Activated CD8-positive, alpha-beta T cell treated with anti-CD3 and anti-CD28 coated beads, Interleukin-2, amount 10 ng/mL, durations not matched to agents 7 days and 5 days (primary cell): ENCODE measurements at regions of chr15 and their contacts with region 1.

Region 1: DNA sequence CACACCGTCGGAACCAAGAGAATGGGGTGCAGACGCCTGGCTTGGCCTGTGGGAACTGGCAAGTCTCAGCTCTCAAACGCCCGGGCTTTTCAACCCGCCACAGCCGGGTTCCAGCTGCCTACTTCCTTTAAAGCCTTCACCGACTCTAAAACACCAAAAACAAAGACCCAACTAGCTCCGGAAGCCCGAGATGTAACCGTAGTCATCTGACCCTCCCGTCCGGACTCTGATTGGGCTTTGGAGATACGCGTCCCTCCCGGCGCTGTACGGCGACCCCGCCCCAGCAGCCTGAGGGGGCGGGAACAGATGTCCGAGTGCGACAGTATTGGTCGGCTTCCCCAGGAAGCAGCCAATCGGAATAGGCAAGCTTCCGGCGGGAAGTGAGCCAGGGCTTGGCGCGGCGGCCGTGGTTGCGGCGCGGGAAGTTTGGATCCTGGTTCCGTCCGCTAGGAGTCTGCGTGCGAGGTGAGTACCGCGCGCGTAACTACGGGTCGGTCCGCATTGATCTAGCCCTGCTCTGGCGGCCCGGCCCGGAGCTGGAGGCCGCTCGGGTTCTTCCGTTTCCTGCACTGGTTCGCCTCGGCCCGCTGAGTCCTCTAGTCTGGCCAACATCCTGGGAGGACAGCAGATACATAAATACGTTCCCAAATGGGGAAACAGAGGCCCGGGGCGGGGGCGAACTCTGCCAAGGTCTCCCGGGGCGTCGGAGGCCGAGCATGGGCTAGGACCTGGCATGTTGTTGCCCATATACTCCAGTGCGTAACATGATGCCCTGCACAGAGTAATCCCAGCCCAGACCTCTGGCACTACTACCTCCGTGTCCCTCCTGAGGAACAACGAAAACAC is at the start of gene BLM:
- DNase-seq: peak; percentile 97
- ATAC-seq: peak; percentile 99
- H3K4me3 Mint-ChIP-seq: peak within 1 kb of the TSS; percentile 81
- H3K27ac Mint-ChIP-seq: peak within 1 kb of the TSS; percentile 94
- H3K4me1 Mint-ChIP-seq: peaks cover 25% of the 10 kb centered on the region
- H3K27me3 Mint-ChIP-seq: no peaks in the 10 kb centered on the region
- total RNA-seq, gene BLM: 52.3 to 57.4 TPM

Region 2: DNA sequence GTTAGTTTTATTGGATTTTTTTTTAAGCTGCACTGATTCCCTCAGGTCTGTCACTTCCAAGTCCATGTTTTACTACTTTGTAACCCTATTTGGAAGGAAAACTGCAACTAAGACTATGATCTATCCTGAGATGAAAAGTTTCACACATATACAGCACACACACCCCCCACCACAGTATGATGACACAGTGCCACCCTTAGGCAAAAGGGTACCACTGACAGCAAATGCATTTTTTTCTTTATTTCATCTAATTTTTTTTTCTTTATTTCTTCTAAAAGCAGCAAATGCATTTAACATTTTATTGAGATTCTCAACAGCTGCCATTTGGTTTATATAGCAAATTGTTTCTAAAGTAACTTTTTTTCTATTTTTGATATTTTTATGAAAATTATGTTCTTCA is 430.5 kb before region 1 on chr15:
- CTCF ChIA-PET with region 1: no interaction called
- POLR2A ChIA-PET with region 1: no interaction called
- DNase-seq: peak; percentile 57
- ATAC-seq: peak; percentile 78
- H3K4me3 Mint-ChIP-seq: no peak overlapping the region
- H3K27ac Mint-ChIP-seq: no peak overlapping the region
- H3K4me1 Mint-ChIP-seq: peaks cover 5% of the 10 kb centered on the region
- H3K27me3 Mint-ChIP-seq: no peaks in the 10 kb centered on the region

Region 3: DNA sequence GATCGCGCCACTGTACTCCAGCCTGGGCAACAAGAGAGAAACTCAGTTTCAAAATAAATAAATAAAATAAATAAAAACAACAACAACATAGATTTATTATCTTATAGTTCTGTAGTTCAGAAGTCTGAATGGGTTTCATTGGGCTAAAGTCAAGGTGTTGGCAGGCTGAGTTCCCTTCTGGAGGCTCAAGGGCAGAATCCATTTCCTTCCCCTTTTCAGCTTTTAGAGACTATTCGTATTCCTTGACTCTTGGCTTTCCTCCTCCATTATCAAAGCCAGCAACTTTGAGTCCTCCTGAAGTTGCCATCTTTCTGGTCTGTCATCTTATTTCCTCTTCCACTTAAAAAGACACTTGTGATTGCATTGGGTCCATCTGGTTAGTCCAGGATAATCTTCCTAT is 12.1 kb after region 1 on chr15:
- CTCF ChIA-PET with region 1: interaction called, 7 read pairs
- POLR2A ChIA-PET with region 1: interaction called, 15 read pairs
- DNase-seq: no peak
- ATAC-seq: no peak
- H3K4me3 Mint-ChIP-seq: no peak overlapping the region
- H3K27ac Mint-ChIP-seq: no peak overlapping the region
- H3K4me1 Mint-ChIP-seq: peaks cover 13% of the 10 kb centered on the region
- H3K27me3 Mint-ChIP-seq: no peaks in the 10 kb centered on the region

Region 4: GRCh38 chr15:90869601-90870353 is 152.6 kb after region 1 on chr15:
- CTCF ChIA-PET with region 1: interaction called, 3 read pairs
- POLR2A ChIA-PET with region 1: interaction called, 12 read pairs
- DNase-seq: peak; percentile 54
- ATAC-seq: peak; percentile 37
- H3K4me3 Mint-ChIP-seq: peak overlapping the region; percentile 89
- H3K27ac Mint-ChIP-seq: peak overlapping the region; percentile 94
- H3K4me1 Mint-ChIP-seq: peaks cover 56% of the 10 kb centered on the region
- H3K27me3 Mint-ChIP-seq: no peaks in the 10 kb centered on the region